Ascending aorta (tissue), 2 donors: ENCODE measurements at regions of chr1 and their contacts with region 1.

Region 1: DNA sequence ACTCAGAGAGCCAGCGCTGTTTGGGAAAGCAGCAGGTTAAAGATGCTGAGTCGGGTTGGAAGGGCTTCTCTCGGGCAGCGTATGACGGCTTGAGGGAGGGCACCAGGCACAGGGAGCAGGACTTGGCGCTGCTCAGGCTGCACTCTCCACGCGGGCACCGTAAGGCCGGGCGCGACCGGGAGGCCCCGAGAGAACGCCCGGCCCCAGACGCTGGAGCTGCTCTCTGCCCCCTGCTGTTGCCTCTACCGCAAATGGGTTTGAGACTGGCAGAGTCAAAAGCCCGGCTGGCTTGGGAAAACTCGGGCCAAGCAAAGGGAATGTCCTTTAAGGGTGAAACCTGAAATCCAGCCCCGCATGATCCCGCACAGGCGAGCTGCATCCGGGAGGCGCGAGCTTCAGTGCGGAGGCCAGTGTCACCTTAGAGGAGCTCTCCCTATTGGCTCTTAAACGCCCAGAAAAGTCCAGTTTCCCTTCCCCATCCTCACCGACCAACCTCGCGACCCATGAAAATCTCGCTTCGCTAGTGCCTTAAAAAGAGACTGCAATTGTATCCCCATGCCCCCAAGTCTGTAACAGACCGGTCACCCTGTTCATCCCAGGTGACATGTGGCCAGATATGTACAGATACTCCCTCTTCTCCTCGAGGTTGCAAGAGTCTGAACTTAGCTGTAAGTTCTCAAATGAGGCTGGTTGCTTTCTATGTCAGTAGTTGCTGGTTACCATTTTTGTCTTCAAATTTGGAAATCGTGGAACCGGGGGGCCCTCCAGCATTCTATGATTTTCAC is 1.1 kb downstream of the PRRX1 start:
- DNase-seq: peak in 1 of 2 donors; percentile 79
- H3K4me3 ChIP-seq: peak overlapping the region; percentile 75 to 77
- H3K27ac ChIP-seq: peak overlapping the region; percentile 82 to 95
- H3K4me1 ChIP-seq: peaks cover 0 to 3% of the 10 kb centered on the region in 2 donors
- H3K27me3 ChIP-seq: no peaks in the 10 kb centered on the region
- CTCF ChIP-seq: peak in 2 of 3 experiments; percentile 38 to 52

Region 2: DNA sequence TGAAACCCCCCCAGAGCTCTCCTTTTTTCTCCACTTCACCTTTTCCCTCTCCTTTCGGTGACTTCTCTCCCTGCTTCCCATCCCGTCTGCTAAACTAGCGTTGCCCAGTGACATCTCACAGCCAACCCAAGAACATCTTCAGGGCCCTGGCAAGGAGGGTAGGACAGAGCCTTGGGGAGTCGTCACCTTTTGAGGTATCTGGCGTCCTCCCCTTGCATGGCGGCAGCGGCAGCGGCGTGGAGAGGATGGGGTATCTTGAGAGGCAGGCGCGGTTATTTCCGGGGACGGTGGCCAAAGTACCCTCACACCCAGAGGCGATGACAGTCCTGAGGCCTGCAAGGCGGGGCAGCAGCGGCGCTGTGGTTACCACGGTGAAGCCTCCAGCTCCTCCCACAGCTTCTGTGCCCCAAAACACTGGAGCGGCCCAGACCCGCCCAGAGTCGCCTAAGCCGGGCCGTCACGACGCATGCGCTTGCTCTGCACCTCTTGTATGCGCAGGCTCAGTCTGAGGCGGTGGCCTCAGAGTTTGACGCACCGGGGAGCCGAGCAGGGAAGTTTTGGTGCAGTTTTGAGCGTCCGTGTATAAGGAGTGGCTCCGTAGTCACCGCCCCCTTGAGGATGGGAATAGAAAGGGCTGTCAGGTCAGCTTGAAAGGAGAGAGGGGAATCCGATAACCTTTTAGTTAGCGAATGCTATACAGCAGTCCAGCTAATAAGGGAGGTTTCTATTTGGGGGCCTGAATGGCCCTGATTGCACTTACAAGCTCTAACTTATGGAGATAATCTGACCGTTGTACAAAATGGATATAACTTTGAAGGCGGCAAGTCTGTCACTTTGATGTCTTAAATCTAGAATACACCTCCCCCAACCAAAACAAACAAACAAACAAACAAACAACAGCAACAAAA is 590.5 kb before region 1 on chr1 and contains the start of gene KIFAP3:
- intact Hi-C with region 1: loop called (anchors 10 kb)
- DNase-seq: peak; percentile 92 to 99
- H3K4me3 ChIP-seq: peak within 1 kb of the TSS; percentile 71 to 84
- H3K27ac ChIP-seq: peak within 1 kb of the TSS; percentile 80 to 84
- H3K4me1 ChIP-seq: peaks cover 0 to 4% of the 10 kb centered on the region in 2 donors
- H3K27me3 ChIP-seq: no peaks in the 10 kb centered on the region
- CTCF ChIP-seq: peak; percentile 23 to 55 (median 28)
- total RNA-seq, gene KIFAP3: 12.6 TPM

Region 3: GRCh38 chr1:170436928-170437327 is 228.1 kb before region 1 on chr1:
- intact Hi-C with region 1: no loop called
- DNase-seq: no peak
- H3K4me3 ChIP-seq: no peak overlapping the region
- H3K27ac ChIP-seq: no peak overlapping the region
- H3K4me1 ChIP-seq: no peaks in the 10 kb centered on the region
- H3K27me3 ChIP-seq: no peaks in the 10 kb centered on the region
- CTCF ChIP-seq: no peak

Region 4: DNA sequence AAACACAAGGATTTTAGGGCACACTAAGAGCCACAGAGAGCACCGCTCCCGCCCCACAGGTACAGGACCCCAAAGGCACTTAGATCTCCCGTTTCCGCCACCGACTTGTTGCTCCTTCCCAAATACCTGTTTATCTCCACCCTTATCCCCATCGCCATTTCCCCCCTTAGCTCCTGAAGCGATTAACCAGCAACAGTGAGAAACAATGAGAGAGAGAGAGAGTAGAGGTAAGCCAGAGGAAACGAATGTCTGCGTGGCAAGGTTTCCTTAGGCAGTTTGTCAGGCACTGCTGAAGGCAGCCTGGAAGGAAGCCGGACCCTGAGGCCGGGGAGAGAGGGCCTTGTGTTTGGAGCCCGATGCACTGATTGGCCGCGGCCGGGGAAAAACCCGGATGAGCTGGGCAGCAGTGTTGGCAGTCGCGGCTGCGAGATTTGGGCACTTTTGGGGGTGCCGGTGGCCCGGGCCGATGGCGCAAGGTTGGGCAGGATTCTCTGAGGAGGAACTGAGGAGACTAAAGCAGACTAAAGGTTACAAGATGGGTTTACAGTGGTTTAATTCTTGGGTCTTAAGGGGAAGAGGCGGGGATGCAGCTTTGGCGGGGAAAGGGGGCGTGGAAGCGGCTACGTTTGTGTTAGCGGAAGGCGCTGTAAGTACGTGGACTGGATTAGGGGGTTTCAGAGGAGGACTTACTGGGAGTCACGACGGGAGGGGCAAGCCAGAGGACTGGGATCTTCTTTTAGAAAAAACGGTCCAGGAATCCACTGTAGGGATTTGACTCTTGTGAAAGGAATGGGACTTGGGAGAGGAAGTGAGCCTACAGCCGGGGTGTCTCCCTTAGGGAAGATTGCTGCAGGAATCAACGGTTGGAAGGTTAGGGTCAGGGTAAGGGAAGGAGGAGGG is 133.0 kb before region 1 on chr1 and contains the start of gene GORAB:
- intact Hi-C with region 1: loop called (anchors 2 kb)
- DNase-seq: peak; percentile 74 to 95
- H3K4me3 ChIP-seq: peak within 1 kb of the TSS; percentile 69 to 72
- H3K27ac ChIP-seq: peak within 1 kb of the TSS; percentile 90 to 94
- H3K4me1 ChIP-seq: peaks cover 5 to 7% of the 10 kb centered on the region in 2 donors
- H3K27me3 ChIP-seq: no peaks in the 10 kb centered on the region
- CTCF ChIP-seq: no peak
- total RNA-seq, gene GORAB: 4.9 TPM

Region 5: GRCh38 chr1:170586321-170587252 is 78.4 kb before region 1 on chr1:
- intact Hi-C with region 1: loop called (anchors 2 kb)
- DNase-seq: peak in 1 of 2 donors; percentile 70
- H3K4me3 ChIP-seq: peak overlapping the region; percentile 32 to 64
- H3K27ac ChIP-seq: peak overlapping the region; percentile 81 to 85
- H3K4me1 ChIP-seq: peaks cover 0 to 11% of the 10 kb centered on the region in 2 donors
- H3K27me3 ChIP-seq: no peaks in the 10 kb centered on the region
- CTCF ChIP-seq: no peak

Region 6: GRCh38 chr1:170765712-170766330 is 100.8 kb after region 1 on chr1:
- intact Hi-C with region 1: loop called (anchors 5 kb)
- DNase-seq: no peak
- H3K4me3 ChIP-seq: no peak overlapping the region
- H3K27ac ChIP-seq: no peak overlapping the region
- H3K4me1 ChIP-seq: no peaks in the 10 kb centered on the region
- H3K27me3 ChIP-seq: no peaks in the 10 kb centered on the region
- CTCF ChIP-seq: peak; percentile 59 to 72 (median 65)